Prostate gland (tissue), 2 donors: ENCODE measurements at regions of chr21 and their contacts with region 1.

Region 1: DNA sequence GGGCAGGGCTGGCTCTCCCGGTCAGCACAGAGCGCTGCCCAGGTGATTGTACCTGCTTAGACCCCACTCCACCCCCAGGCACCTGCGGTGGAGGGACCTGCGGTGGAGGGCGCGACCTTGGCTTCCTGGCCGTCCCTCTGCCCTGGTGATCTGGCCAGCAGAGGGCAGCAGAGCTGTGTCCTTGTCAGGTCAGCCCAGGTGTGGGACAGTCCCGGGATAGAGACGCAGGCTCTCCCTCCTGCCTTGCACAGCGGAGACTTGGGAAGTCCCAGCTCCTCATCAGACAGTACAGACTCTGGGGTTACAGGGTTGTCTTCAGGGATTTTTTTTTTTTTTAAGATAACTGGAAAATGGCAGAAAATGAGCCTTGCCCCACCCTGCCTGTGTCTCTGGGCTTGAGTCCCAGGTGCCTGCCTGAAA is 10.0 kb downstream of the SLX9 start:
- DNase-seq: peak; percentile 84
- H3K4me3 ChIP-seq: no peak overlapping the region
- H3K27ac ChIP-seq: no peak overlapping the region
- H3K4me1 ChIP-seq: no peaks in the 10 kb centered on the region
- H3K27me3 ChIP-seq: no peaks in the 10 kb centered on the region
- CTCF ChIP-seq: peak; percentile 94 to 95 (median 95)
- POLR2A ChIP-seq: no peak

Region 2: DNA sequence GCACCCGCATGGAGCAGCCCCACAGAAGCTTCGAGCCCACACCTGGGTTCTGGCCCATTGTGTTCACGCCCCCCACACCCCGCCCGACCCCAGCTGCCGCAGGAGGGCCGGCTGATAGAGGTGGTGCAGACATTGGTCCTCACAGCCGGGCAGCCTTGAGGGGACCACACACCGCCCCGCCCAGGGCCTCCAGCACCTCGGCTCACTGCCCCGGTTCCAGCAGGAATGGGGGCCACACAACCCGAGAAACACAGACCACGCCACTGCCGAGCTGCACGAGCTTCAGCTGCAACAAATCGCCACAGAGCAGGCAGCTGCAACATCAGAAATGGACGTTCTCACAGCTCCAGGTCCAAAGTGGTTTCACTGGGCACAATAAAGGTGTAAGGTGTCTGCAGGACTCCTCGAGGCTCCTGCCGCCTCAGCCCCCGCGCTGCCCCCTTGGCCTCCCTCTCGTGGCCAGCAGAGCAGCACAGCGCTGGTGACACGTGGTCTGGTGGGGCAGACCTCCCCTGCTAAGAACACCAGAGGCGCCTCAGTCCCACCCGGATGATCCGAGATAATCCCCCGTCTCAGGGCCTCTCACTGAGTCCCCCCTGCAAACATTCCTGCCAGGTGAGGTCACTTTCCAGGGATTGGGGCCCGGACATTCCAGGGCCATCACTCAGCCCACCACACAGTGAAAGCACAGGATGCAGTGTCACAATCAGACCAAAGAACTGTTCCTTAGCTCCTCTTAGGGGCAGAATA is 62.3 kb after region 1 on chr21:
- intact Hi-C with region 1: no loop called
- DNase-seq: no peak
- H3K4me3 ChIP-seq: no peak overlapping the region
- H3K27ac ChIP-seq: no peak overlapping the region
- H3K4me1 ChIP-seq: no peaks in the 10 kb centered on the region
- H3K27me3 ChIP-seq: no peaks in the 10 kb centered on the region
- CTCF ChIP-seq: no peak
- POLR2A ChIP-seq: no peak

Region 3: GRCh38 chr21:45130324-45130774 is 180.6 kb after region 1 on chr21:
- intact Hi-C with region 1: loop called (anchors 2 kb)
- DNase-seq: no peak
- H3K4me3 ChIP-seq: no peak overlapping the region
- H3K27ac ChIP-seq: peak overlapping the region; percentile 41 to 58
- H3K4me1 ChIP-seq: peaks cover 4% of the 10 kb centered on the region
- H3K27me3 ChIP-seq: no peaks in the 10 kb centered on the region
- CTCF ChIP-seq: no peak
- POLR2A ChIP-seq: no peak

Region 4: DNA sequence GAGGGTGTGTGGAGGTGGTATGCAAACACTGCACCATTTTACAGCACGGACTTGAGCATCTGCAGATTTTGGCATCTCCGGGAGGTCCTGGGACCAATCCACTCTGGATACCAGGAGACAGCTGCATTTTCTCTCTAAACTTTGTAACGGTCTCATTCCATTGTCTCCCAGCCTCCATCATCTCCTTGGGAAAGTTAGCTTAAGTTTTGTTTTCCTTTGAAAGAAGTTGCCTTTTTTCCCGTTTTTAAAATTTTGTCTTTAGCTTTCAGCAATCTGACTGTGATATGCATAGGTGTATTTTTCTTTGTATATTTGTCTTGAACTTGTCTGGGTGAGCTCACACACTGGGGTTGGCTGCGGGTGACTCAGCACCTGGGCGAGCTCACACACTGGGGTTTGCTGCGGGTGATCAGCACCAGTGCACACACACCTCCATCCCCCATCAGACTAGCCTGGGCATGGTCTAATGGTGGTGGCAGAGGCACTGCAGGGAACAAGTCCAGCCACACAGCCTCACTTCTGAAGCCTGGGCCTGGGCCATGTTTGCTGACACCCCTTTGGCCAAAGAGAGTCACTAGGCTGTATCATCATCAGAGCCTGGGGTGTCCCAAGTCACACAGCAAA is 423.1 kb after region 1 on chr21:
- intact Hi-C with region 1: no loop called
- DNase-seq: no peak
- H3K4me3 ChIP-seq: no peak overlapping the region
- H3K27ac ChIP-seq: no peak overlapping the region
- H3K4me1 ChIP-seq: no peaks in the 10 kb centered on the region
- H3K27me3 ChIP-seq: no peaks in the 10 kb centered on the region
- CTCF ChIP-seq: no peak
- POLR2A ChIP-seq: no peak